IMR-90 (cell line): ENCODE measurements at regions of chr2 and their contacts with region 1.

Region 1: DNA sequence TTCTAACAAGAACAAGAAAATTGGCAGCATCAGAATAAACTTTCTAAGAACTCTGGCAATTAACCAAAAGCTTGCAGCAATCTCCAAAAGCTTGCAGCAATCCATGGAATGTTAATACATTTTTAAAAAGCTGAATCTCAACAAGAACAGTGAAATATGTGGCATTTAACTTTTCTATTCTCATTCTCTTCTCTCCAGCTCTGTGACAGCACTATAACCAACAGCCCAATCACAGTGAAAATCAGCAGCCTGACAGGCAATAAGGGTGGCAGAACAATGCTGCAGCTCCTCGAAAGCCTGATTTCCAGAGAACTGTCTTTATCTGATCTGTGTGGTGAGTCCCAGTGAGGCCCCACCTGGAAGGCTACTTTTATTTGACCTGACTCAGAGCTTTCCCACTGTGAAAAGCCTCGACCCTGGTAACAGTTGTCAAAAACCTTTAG is 60.0 kb downstream of the TMEM131 start:
- DNase-seq: peak; percentile 72
- ATAC-seq: peak; percentile 82
- H3K4me3 ChIP-seq: no peak overlapping the region
- H3K27ac ChIP-seq: peak overlapping the region; percentile 18; the same call in 1 of the 2 replicates
- H3K4me1 ChIP-seq: peaks cover 6% of the 10 kb centered on the region
- H3K27me3 ChIP-seq: no peaks in the 10 kb centered on the region
- CTCF ChIP-seq: no peak
- POLR2A ChIP-seq: no peak
- RAD21 ChIP-seq: no peak

Region 2: DNA sequence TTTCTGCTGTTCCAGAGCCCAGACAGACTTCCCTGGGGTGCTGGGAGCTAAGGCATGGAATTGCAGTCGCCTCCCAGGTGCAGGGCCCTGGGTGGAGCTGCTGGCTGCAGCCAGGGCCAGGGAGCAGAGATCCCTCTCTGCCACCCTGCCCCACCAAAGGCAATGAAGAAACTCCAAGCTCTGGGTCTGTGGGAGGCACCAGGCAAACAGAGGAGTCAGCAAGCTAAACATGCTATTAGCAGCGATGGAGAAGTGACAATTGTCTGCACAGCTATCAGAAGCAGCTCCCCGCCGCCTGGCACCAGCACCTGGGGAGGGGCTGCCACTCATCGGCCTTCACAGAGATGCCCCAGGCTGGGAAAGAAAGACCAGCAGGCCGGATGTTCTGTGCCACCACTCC is 317.8 kb before region 1 on chr2:
- CTCF ChIA-PET with region 1: no interaction called
- POLR2A ChIA-PET with region 1: no interaction called
- dilution Hi-C with region 1: no loop called
- in situ Hi-C with region 1: no loop called
- intact Hi-C with region 1: no loop called
- DNase-seq: no peak
- ATAC-seq: no peak
- H3K4me3 ChIP-seq: no peak overlapping the region
- H3K27ac ChIP-seq: no peak overlapping the region
- H3K4me1 ChIP-seq: no peaks in the 10 kb centered on the region
- H3K27me3 ChIP-seq: no peaks in the 10 kb centered on the region
- CTCF ChIP-seq: no peak
- POLR2A ChIP-seq: no peak
- RAD21 ChIP-seq: no peak

Region 3: GRCh38 chr2:97870396-97870843 is 65.3 kb before region 1 on chr2:
- CTCF ChIA-PET with region 1: no interaction called
- POLR2A ChIA-PET with region 1: no interaction called
- dilution Hi-C with region 1: no loop called
- in situ Hi-C with region 1: no loop called
- intact Hi-C with region 1: loop called (anchors 5 kb)
- DNase-seq: peak; percentile 89
- ATAC-seq: peak; percentile 72
- H3K4me3 ChIP-seq: no peak overlapping the region
- H3K27ac ChIP-seq: peak overlapping the region; percentile 49
- H3K4me1 ChIP-seq: peaks cover 5% of the 10 kb centered on the region
- H3K27me3 ChIP-seq: no peaks in the 10 kb centered on the region
- CTCF ChIP-seq: no peak
- POLR2A ChIP-seq: no peak
- RAD21 ChIP-seq: peak; percentile 22; the same call in 1 of the 2 replicates

Region 4: GRCh38 chr2:97890093-97890492 is 45.6 kb before region 1 on chr2:
- CTCF ChIA-PET with region 1: no interaction called
- POLR2A ChIA-PET with region 1: no interaction called
- dilution Hi-C with region 1: no loop called
- in situ Hi-C with region 1: no loop called
- intact Hi-C with region 1: no loop called
- DNase-seq: no peak
- ATAC-seq: no peak
- H3K4me3 ChIP-seq: no peak overlapping the region
- H3K27ac ChIP-seq: no peak overlapping the region
- H3K4me1 ChIP-seq: no peaks in the 10 kb centered on the region
- H3K27me3 ChIP-seq: no peaks in the 10 kb centered on the region
- CTCF ChIP-seq: no peak
- POLR2A ChIP-seq: no peak
- RAD21 ChIP-seq: no peak

Region 5: DNA sequence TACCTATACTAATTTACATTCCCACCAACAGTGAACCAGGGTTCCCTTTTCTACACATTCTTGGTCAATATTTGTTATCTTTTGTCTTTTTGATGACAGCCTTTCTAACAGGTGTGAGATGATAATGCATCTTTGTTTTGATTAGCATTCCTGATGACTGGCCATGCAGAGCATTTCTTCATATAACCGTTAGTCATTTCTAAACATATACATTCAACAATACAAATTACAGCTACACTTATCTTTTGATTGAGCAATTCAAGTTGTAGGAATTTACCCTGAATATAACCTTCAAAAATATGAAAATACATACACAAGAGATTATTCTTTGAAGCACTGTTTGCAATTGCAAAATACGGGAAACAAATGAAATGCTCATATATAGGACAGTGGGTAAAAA is 34.9 kb before region 1 on chr2:
- CTCF ChIA-PET with region 1: no interaction called
- POLR2A ChIA-PET with region 1: no interaction called
- dilution Hi-C with region 1: no loop called
- in situ Hi-C with region 1: no loop called
- intact Hi-C with region 1: loop called (anchors 5 kb)
- DNase-seq: peak; percentile 66
- ATAC-seq: peak; percentile 62
- H3K4me3 ChIP-seq: no peak overlapping the region
- H3K27ac ChIP-seq: no peak overlapping the region
- H3K4me1 ChIP-seq: no peaks in the 10 kb centered on the region
- H3K27me3 ChIP-seq: no peaks in the 10 kb centered on the region
- CTCF ChIP-seq: no peak
- POLR2A ChIP-seq: no peak
- RAD21 ChIP-seq: no peak

Region 6: GRCh38 chr2:97950329-97951154 is 14.8 kb after region 1 on chr2:
- CTCF ChIA-PET with region 1: no interaction called
- POLR2A ChIA-PET with region 1: no interaction called
- dilution Hi-C with region 1: no loop called
- in situ Hi-C with region 1: no loop called
- intact Hi-C with region 1: loop called (anchors 2 kb)
- DNase-seq: peak; percentile 91
- ATAC-seq: peak; percentile 98
- H3K4me3 ChIP-seq: no peak overlapping the region
- H3K27ac ChIP-seq: peak overlapping the region; percentile 92
- H3K4me1 ChIP-seq: peaks cover 11% of the 10 kb centered on the region
- H3K27me3 ChIP-seq: no peaks in the 10 kb centered on the region
- CTCF ChIP-seq: no peak
- POLR2A ChIP-seq: no peak
- RAD21 ChIP-seq: no peak

Region 7: DNA sequence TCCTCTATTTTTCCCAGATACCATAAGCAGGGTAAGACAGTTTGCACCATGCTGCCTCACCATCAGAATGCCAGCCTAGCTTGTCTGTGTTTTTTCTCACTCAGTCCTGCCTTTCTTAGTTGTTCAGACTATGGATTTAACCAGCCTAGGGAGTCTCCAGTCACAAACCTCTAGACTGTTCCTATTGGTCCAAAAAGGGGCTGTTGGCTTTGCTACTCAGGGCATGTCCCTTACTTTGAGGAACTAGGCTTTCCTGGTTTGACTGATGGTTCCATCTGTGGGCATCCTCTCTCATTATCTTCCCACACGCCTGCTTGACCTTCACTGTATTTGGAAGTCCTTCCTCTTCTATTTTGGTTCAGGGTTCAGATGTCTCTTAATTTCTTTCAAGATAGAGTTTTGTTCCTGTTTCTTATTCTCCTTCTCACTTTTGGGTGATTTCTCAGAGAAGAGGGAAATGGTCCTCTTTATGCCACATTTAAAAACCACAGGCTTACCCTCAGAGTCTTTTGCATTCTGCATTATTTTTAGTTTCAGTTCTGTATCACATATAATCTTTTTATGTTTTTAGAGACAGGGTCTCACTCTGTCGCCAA is 91.3 kb after region 1 on chr2:
- CTCF ChIA-PET with region 1: no interaction called
- POLR2A ChIA-PET with region 1: no interaction called
- dilution Hi-C with region 1: no loop called
- in situ Hi-C with region 1: no loop called
- intact Hi-C with region 1: no loop called
- DNase-seq: no peak
- ATAC-seq: no peak
- H3K4me3 ChIP-seq: no peak overlapping the region
- H3K27ac ChIP-seq: no peak overlapping the region
- H3K4me1 ChIP-seq: no peaks in the 10 kb centered on the region
- H3K27me3 ChIP-seq: peaks cover 2% of the 10 kb centered on the region; the same call in 1 of the 2 replicates
- CTCF ChIP-seq: no peak
- POLR2A ChIP-seq: no peak
- RAD21 ChIP-seq: no peak